Aorta (tissue), 5 donors: ENCODE measurements at regions of chr4 and their contacts with region 1.

Region 1: GRCh38 chr4:172962564-172963353 is 205.9 kb upstream of the GALNT7 start:
- DNase-seq: no peak
- ATAC-seq: peak; percentile 76
- H3K4me3 ChIP-seq: peak overlapping the region in 1 of 2 donors; percentile 24
- H3K27ac ChIP-seq: peak overlapping the region; percentile 69 to 81
- H3K4me1 ChIP-seq: peaks cover 0 to 9% of the 10 kb centered on the region in 2 donors
- H3K27me3 ChIP-seq: no peaks in the 10 kb centered on the region

Region 2: DNA sequence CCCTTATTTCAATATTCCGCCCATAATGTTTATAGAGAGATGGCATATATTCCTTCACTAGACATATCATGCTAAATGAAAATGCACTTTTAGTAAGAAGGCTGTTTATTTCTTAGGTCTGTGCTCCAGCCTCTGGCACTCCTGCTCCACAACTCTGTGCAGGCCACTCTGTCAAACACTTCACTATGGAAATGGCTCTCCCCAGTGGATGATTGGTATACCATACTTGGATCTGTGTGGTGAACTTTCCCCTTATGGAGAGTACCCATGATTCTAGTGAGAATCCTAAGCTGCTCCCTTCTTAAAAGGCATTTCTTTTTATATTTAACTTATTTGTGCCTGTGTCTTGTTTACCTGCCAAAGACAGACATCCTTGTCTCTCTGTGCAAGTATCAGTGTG is 274.2 kb before region 1 on chr4:
- intact Hi-C with region 1: no loop called
- DNase-seq: no peak
- ATAC-seq: no peak
- H3K4me3 ChIP-seq: no peak overlapping the region
- H3K27ac ChIP-seq: no peak overlapping the region
- H3K4me1 ChIP-seq: no peaks in the 10 kb centered on the region
- H3K27me3 ChIP-seq: no peaks in the 10 kb centered on the region

Region 3: GRCh38 chr4:172998527-172999469 is 36.0 kb after region 1 on chr4:
- intact Hi-C with region 1: loop called in 1 of 2 experiments (anchors 5 kb)
- DNase-seq: no peak
- ATAC-seq: peak; percentile 85
- H3K4me3 ChIP-seq: no peak overlapping the region
- H3K27ac ChIP-seq: peak overlapping the region; percentile 71 to 77
- H3K4me1 ChIP-seq: peaks cover 0 to 8% of the 10 kb centered on the region in 2 donors
- H3K27me3 ChIP-seq: no peaks in the 10 kb centered on the region